ENCODE measurements at regions of chr1 and their contacts with region 1.

Region 1: GRCh38 chr1:161098210-161099068 is at the start of gene KLHDC9:
- DNase-seq: peak; percentile 86
- ATAC-seq: peak; percentile 95
- H3K4me3 ChIP-seq: peak within 1 kb of the TSS; percentile 76 to 77
- H3K27ac ChIP-seq: peak within 1 kb of the TSS; percentile 81
- H3K4me1 ChIP-seq: 0 out of 2 replicates have a peak, but pooled peaks cover 6% of the 10 kb centered on the region
- H3K27me3 ChIP-seq: no peaks in the 10 kb centered on the region
- CTCF ChIP-seq: no peak
- total RNA-seq, gene KLHDC9: 7.6 TPM

Region 2: DNA sequence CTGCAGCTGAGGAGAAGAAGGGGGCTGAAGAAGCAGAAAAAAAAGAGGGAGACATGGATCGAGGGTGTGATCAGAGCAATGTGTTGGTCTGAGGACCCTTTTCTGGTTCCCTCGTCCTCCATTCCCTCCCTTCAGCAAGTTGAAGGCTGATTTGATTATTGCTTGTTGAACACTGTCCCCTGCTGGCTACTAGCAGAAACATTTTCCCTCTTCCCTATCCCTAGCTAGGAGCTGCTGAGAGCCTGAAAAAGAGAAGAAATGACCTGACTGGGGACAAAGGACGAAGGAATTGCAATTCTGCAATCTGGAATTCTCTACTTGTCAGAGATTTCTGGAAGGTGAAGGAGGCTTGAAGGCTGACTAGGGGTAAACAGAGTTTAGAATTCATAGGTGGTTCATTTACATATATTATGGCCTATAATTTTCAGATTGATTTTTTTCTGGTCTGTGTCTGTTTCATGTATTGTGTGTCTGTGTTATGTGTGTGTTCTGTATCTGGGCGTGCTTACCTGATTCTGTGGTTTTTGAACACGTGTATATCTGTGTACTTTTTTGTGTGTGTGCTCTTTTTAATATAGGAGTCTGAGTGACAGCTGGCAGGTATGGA is 721.8 kb before region 1 on chr1:
- CTCF ChIA-PET with region 1: no interaction called
- POLR2A ChIA-PET with region 1: interaction called, 12 read pairs
- in situ Hi-C with region 1: no loop called
- intact Hi-C with region 1: no loop called
- DNase-seq: peak; percentile 63
- ATAC-seq: peak; percentile 87
- H3K4me3 ChIP-seq: no peak overlapping the region
- H3K27ac ChIP-seq: no peak overlapping the region
- H3K4me1 ChIP-seq: no peaks in the 10 kb centered on the region
- H3K27me3 ChIP-seq: no peaks in the 10 kb centered on the region
- CTCF ChIP-seq: peak; percentile 97

Region 3: GRCh38 chr1:161044908-161045749 is 53.3 kb before region 1 on chr1:
- CTCF ChIA-PET with region 1: interaction called, 4 read pairs
- POLR2A ChIA-PET with region 1: interaction called, 3 read pairs
- in situ Hi-C with region 1: no loop called
- intact Hi-C with region 1: loop called (anchors 5 kb)
- DNase-seq: no peak
- ATAC-seq: peak; percentile 69
- H3K4me3 ChIP-seq: peak overlapping the region; percentile 69 to 93
- H3K27ac ChIP-seq: peak overlapping the region; percentile 99
- H3K4me1 ChIP-seq: peaks cover 13% of the 10 kb centered on the region
- H3K27me3 ChIP-seq: no peaks in the 10 kb centered on the region
- CTCF ChIP-seq: no peak

Region 4: GRCh38 chr1:161185282-161185682 is 86.8 kb after region 1 on chr1:
- CTCF ChIA-PET with region 1: no interaction called
- POLR2A ChIA-PET with region 1: no interaction called
- in situ Hi-C with region 1: no loop called
- intact Hi-C with region 1: no loop called
- DNase-seq: no peak
- ATAC-seq: no peak
- H3K4me3 ChIP-seq: no peak overlapping the region
- H3K27ac ChIP-seq: no peak overlapping the region
- H3K4me1 ChIP-seq: no peaks in the 10 kb centered on the region
- H3K27me3 ChIP-seq: no peaks in the 10 kb centered on the region
- CTCF ChIP-seq: no peak